Naive thymus-derived CD4-positive, alpha-beta T cell (primary cell): ENCODE measurements at regions of chr12 and their contacts with region 1.

Region 1: GRCh38 chr12:91704446-91704845 is 441.2 kb downstream of the BTG1 start:
- DNase-seq: no peak
- ATAC-seq: no peak
- H3K4me3 ChIP-seq: no peak overlapping the region
- H3K4me3 Mint-ChIP-seq: no peak overlapping the region
- H3K27ac ChIP-seq: no peak overlapping the region
- H3K27ac Mint-ChIP-seq: no peak overlapping the region
- H3K4me1 ChIP-seq: no peaks in the 10 kb centered on the region
- H3K4me1 Mint-ChIP-seq: peaks cover 0 to 4% (median 0%) of the 10 kb centered on the region in 7 donors
- H3K27me3 ChIP-seq: no peaks in the 10 kb centered on the region
- H3K27me3 Mint-ChIP-seq: no peaks in the 10 kb centered on the region

Region 2: DNA sequence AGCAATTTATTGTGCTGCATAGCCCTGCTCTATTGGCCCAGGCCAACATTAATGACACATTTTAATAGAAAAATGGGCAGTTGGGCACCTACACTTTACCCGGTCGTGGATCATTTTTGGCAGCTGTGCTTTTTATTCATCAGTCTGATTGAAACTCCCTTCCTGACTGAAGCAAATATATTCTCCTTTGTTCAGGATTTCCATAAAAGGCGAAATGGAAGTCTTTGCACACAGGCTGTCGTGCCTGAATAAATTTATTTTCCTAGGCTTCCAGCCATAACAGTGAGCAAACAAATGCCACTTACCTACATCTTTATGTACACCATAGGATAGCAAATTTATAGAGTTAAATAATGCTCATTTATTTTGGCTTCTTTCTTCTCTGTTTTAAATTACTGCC is 41.1 kb before region 1 on chr12:
- CTCF ChIA-PET with region 1: no interaction called
- POLR2A ChIA-PET with region 1: no interaction called
- intact Hi-C with region 1: no loop called
- DNase-seq: no peak
- ATAC-seq: no peak
- H3K4me3 ChIP-seq: no peak overlapping the region
- H3K4me3 Mint-ChIP-seq: no peak overlapping the region
- H3K27ac ChIP-seq: no peak overlapping the region
- H3K27ac Mint-ChIP-seq: no peak overlapping the region
- H3K4me1 ChIP-seq: no peaks in the 10 kb centered on the region
- H3K4me1 Mint-ChIP-seq: peaks cover 0 to 32% (median 28%) of the 10 kb centered on the region in 7 donors
- H3K27me3 ChIP-seq: no peaks in the 10 kb centered on the region
- H3K27me3 Mint-ChIP-seq: no peaks in the 10 kb centered on the region

Region 3: GRCh38 chr12:91746976-91747375 is 42.5 kb after region 1 on chr12:
- CTCF ChIA-PET with region 1: no interaction called
- POLR2A ChIA-PET with region 1: no interaction called
- intact Hi-C with region 1: loop called in 1 of 2 experiments (anchors 5 kb)
- DNase-seq: no peak
- ATAC-seq: no peak
- H3K4me3 ChIP-seq: no peak overlapping the region
- H3K4me3 Mint-ChIP-seq: no peak overlapping the region
- H3K27ac ChIP-seq: no peak overlapping the region
- H3K27ac Mint-ChIP-seq: peak overlapping the region in 1 of 9 donors; percentile 8
- H3K4me1 ChIP-seq: no peaks in the 10 kb centered on the region
- H3K4me1 Mint-ChIP-seq: peaks cover 0 to 2% (median 0%) of the 10 kb centered on the region in 7 donors
- H3K27me3 ChIP-seq: no peaks in the 10 kb centered on the region
- H3K27me3 Mint-ChIP-seq: no peaks in the 10 kb centered on the region